ENCODE measurements at regions of chr2 and their contacts with region 1.

Region 1: GRCh38 chr2:161077367-161078210 is 82.6 kb upstream of the TANK start:
- DNase-seq: peak; percentile 78
- H3K4me3 Mint-ChIP-seq: peak overlapping the region; percentile 28
- H3K27ac Mint-ChIP-seq: peak overlapping the region; percentile 89
- H3K4me1 Mint-ChIP-seq: peaks cover 51% of the 10 kb centered on the region
- H3K27me3 Mint-ChIP-seq: no peaks in the 10 kb centered on the region

Region 2: DNA sequence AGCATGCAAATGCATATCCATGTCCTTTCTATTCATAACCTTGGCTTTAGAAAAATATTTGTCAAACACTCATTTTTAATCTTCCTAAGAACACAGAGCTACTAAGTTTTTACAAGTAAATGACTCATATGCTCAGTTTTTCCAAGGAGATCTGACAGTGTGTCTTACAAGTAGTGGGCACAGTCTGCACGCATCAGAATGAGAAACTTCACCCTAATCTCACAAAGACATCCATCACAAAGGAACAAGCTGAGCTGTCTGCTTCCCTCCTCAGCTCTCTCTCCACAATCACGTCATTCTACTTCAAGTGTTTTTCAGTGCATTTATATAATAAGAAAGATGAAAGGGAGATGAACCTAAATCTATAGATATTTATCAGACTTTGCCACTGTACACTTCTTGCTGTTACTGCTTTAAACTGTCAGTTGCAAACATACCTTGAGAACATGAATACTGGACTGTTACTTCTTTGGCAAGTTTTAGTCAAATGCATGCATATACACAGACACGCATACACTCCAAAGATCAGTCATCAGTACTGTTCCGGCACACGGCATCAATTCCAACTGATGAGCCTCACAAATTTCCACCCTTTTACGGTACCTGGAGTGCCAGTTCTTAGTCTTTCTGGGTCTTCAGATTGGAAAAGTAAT is 659.7 kb before region 1 on chr2:
- intact Hi-C with region 1: loop called (anchors 5 kb)
- DNase-seq: no peak
- H3K4me3 Mint-ChIP-seq: no peak overlapping the region
- H3K27ac Mint-ChIP-seq: peak overlapping the region; percentile 85
- H3K4me1 Mint-ChIP-seq: peaks cover 61% of the 10 kb centered on the region
- H3K27me3 Mint-ChIP-seq: no peaks in the 10 kb centered on the region

Region 3: DNA sequence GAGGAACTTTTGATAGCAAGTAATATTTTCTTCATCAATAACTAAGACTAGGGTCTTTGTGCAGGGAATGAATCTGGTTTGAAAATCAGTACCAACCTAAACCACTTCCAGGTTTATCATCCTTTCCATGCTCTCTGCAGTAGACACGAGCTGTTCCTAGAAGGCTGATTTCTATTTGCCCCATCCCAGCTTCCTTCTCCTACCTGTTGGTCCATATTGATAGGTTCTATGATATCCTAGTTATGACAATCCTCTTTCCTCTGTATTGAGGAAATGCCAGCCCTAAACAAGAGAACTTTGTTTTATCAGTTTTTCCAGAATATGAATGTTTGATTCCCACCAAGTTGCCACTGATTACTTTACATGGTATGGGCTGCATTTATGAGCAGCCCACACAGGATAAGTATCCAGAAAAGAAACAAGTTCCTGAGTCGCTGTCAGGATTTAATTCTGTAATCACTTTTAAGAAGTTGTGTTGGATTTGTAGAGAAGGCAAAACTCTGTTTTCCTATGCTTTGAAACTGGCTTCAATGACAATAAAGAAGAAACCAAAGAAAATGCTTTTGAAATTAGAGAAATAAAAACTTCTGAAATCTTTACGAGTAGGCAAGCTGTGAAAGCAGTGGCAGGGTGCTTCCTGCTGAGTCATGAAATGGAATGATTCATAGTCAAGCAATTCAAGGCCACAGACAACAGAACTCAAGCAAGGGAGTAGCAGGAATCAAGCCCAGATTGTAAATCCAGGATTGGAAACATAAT is 45.4 kb after region 1 on chr2:
- intact Hi-C with region 1: loop called (anchors 5 kb)
- DNase-seq: no peak
- H3K4me3 Mint-ChIP-seq: no peak overlapping the region
- H3K27ac Mint-ChIP-seq: peak overlapping the region; percentile 3
- H3K4me1 Mint-ChIP-seq: peaks cover 15% of the 10 kb centered on the region
- H3K27me3 Mint-ChIP-seq: no peaks in the 10 kb centered on the region

Region 4: GRCh38 chr2:161166538-161167409 is 89.2 kb after region 1 on chr2:
- intact Hi-C with region 1: loop called (anchors 1 kb)
- DNase-seq: peak; percentile 58
- H3K4me3 Mint-ChIP-seq: peak overlapping the region; percentile 34
- H3K27ac Mint-ChIP-seq: peak overlapping the region; percentile 87
- H3K4me1 Mint-ChIP-seq: peaks cover 84% of the 10 kb centered on the region
- H3K27me3 Mint-ChIP-seq: no peaks in the 10 kb centered on the region

Region 5: GRCh38 chr2:161954103-161954502 is 876.5 kb after region 1 on chr2:
- intact Hi-C with region 1: loop called (anchors 2 kb)
- DNase-seq: no peak
- H3K4me3 Mint-ChIP-seq: peak overlapping the region; percentile 37
- H3K27ac Mint-ChIP-seq: peak overlapping the region; percentile 94
- H3K4me1 Mint-ChIP-seq: peaks cover 66% of the 10 kb centered on the region
- H3K27me3 Mint-ChIP-seq: no peaks in the 10 kb centered on the region